Cardiac septum (tissue), 1 donor: ENCODE measurements at regions of chr1 and their contacts with region 1.

Region 1: GRCh38 chr1:22641906-22642636 is 1.4 kb upstream of the C1QC start:
- DNase-seq: peak; percentile 87

Region 2: DNA sequence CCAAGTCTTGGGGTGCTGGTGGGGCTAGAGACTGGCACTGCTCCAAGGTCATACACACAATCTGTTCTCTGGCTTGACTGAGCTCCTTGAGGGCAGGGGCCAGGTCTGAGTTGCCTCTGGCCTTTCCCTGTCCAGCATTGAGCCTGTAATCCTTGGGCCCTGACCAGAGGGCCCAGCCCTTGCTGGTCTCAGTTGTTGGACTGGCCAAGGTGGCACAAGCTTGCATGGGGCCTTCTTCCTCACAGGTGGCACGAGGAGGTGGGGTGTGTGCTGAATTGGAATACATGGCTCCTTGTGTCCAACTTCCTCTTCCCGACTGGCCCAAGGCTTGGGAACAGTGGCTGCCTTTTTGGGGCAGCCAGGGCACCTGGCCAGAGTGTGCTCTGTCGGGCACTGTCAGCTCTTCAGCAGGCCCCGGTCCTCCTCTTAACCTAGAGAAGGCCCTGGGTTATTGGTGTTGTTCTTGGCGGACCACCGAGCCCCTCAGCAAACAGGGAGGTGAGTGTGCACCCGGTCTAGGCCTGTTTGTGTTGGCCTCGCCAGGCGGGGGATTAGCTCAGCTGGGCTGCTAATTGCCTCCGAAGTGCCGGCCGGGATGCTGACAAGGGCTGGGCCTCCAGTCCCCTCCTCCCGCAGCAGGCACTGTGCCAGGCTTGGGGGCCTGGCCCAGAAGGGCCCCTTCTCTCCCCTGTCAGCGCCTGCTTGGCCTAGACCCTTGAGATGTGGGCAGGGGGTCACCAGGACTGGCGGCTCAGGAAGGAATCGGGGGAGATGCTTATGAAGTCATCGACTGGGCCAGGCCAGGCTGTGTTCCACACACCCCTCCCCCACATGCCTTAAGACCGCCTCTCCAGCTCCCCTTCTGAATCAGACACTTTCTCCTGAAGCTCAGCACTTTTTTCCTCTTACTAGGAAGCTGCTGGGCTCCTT is 527.7 kb before region 1 on chr1:
- intact Hi-C with region 1: loop called (anchors 10 kb)
- DNase-seq: no peak

Region 3: DNA sequence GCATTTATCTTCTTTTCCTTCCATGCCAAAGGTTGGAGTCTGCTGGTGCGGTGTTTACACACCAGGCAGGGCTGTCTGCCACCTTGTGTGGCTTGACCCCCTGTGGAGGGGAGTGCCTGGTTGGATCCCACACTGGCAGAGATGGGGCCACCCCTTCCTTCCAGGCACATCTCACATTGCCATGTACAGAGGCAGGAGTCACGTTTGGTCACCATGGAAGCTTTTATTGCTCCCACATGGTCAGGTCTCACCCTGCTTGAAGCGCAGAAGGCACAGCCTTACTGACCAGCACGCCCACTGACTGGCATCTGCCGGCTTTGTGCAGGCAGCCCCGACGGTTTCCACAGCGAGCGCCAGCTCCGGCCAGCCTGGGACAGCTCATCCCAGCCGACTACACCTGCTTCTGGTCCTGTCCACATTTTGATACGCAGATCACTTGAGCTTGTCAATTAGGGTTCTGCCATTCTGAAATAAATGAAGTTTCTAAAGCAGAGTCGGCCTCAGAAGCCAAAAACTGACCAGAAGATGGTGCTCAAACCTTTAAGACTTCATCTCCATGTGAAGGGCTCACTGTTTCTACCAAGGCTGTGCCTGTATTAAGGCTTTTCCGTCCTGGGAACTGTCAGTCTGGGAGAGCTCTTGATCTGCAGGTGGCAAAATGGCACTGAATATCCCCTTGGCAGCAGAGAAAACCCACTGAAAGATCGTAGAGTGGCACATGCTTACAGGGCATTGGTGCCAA is 114.3 kb before region 1 on chr1:
- intact Hi-C with region 1: loop called (anchors 5 kb)
- DNase-seq: peak; percentile 53

Region 4: GRCh38 chr1:22794647-22795365 is 152.7 kb after region 1 on chr1:
- intact Hi-C with region 1: no loop called
- DNase-seq: no peak

Region 5: GRCh38 chr1:23035823-23036452 is 393.9 kb after region 1 on chr1:
- intact Hi-C with region 1: no loop called
- DNase-seq: no peak